Psoas muscle (tissue), 8 donors: ENCODE measurements at regions of chr1 and their contacts with region 1.

Region 1: DNA sequence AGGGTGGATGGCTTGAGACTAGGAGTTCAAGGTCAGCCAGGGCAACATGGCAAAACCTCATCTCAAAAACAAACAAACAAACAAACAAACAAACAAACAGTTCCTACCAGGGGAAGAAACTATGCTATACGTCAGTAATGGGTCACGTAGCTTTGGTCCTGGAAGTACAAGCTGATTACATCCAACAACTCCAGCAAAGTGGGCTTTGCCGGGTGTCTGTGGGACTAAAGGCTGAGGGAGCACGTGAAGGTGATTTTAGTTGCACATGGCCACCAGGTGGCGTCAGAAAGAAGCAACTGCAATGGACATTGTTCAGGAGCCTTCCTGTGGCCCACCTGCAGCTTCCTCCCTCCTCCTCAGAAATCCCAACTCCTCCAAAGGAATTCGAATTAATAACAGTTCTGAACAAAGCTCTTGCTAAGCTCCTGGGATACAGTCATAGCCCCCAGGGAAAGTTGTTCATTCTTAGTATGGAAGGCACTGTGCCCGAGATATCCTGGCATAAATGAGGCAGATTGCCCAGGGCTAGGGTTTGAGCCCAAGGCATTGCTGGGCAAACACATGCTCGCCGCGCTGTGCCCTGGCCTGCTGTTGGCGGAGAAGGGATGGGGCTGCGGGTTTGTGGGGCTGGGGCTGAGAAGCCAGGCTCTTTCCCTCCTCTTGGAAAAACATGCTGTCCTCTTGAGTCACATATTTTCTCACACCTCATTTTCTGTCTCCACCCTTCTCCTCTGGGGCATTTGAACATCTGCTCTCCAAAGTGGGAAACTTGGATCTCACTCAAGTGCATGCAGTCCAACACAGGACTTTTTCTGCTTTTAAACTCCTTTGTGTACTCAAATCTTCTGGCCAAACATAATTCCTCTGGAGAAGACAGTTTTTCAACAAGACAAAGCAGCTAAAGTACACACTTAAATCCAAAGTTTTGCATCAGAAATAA is 28.6 kb downstream of the AKNAD1 start:
- DNase-seq: peak; percentile 83 to 87
- ATAC-seq: peak; percentile 45 to 72 (median 60)
- H3K4me3 ChIP-seq: peak overlapping the region; percentile 20
- H3K27ac ChIP-seq: peak overlapping the region; percentile 89
- H3K4me1 ChIP-seq: peaks cover 34% of the 10 kb centered on the region
- H3K27me3 ChIP-seq: no peaks in the 10 kb centered on the region
- CTCF ChIP-seq: peak; percentile 85

Region 2: GRCh38 chr1:108877348-108878159 is 49.3 kb after region 1 on chr1:
- intact Hi-C with region 1: loop called (anchors 5 kb)
- DNase-seq: no peak
- ATAC-seq: peak in 1 of 4 donors; percentile 36
- H3K4me3 ChIP-seq: peak overlapping the region; percentile 83
- H3K27ac ChIP-seq: peak overlapping the region; percentile 80
- H3K4me1 ChIP-seq: peaks cover 17% of the 10 kb centered on the region
- H3K27me3 ChIP-seq: no peaks in the 10 kb centered on the region
- CTCF ChIP-seq: no peak

Region 3: GRCh38 chr1:108897865-108898720 is 69.8 kb after region 1 on chr1:
- intact Hi-C with region 1: loop called (anchors 1 to 2 kb)
- DNase-seq: no peak
- ATAC-seq: peak; percentile 62 to 86 (median 71)
- H3K4me3 ChIP-seq: no peak overlapping the region
- H3K27ac ChIP-seq: no peak overlapping the region
- H3K4me1 ChIP-seq: peaks cover 9% of the 10 kb centered on the region
- H3K27me3 ChIP-seq: no peaks in the 10 kb centered on the region
- CTCF ChIP-seq: peak; percentile 86